Activated T-helper 2 cell treated with anti-CD3 and anti-CD28 coated beads, Interferon-gamma antibody, Interleukin-2, Interleukin-4, amounts not matched to agents 10 μg/mL and 5 μg/mL and 100 μg/mL, durations not matched to agents 14 hours and 24 hours and 36 hours (primary cell): ENCODE measurements at regions of chr17 and their contacts with region 1.

Region 1: DNA sequence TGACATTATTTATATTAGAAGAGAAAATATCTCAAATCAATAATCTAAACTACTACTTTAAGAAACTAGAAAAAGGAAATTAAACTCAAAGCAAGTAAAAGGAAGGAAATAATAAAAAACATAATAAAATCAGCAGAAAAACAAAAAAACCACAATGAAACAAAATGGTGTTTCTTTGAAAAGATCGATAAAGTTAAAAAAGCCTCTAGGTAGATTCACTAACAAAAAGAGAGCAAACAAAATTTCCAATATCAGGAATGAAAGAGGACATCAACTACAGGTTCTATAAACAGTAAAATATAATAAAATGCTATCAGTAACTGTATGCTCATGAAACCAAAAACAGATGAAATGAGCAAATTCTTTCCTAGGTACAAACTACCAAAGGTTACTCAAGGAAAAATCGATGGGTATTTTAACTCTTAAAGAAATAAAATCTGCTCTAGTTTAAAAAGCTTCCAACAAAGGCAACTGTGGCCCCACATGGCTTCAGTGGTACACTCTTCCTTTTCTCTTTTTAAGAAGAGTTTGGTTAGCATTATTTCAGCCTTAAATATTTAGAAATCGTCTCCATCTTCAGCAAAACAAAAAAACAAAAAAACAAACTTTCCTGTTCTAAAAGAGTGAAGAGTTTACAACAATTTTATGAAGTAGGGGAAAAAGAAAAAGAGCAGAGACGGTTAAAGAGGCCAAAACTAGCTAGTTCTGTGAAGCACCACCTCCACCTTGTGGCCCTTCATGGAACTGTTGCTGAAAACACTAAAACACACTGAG is 102.2 kb downstream of the TRIM37 start:
- DNase-seq: peak; percentile 44
- H3K4me3 Mint-ChIP-seq: no peak overlapping the region
- H3K27ac Mint-ChIP-seq: peak overlapping the region; percentile 70
- H3K4me1 Mint-ChIP-seq: peaks cover 20% of the 10 kb centered on the region
- H3K27me3 Mint-ChIP-seq: no peaks in the 10 kb centered on the region

Region 2: GRCh38 chr17:58517734-58518609 is 486.6 kb before region 1 on chr17:
- intact Hi-C with region 1: loop called (anchors 1 kb)
- DNase-seq: peak; percentile 100
- H3K4me3 Mint-ChIP-seq: peak overlapping the region; percentile 89
- H3K27ac Mint-ChIP-seq: peak overlapping the region; percentile 95
- H3K4me1 Mint-ChIP-seq: peaks cover 34% of the 10 kb centered on the region
- H3K27me3 Mint-ChIP-seq: peaks cover 2% of the 10 kb centered on the region

Region 3: DNA sequence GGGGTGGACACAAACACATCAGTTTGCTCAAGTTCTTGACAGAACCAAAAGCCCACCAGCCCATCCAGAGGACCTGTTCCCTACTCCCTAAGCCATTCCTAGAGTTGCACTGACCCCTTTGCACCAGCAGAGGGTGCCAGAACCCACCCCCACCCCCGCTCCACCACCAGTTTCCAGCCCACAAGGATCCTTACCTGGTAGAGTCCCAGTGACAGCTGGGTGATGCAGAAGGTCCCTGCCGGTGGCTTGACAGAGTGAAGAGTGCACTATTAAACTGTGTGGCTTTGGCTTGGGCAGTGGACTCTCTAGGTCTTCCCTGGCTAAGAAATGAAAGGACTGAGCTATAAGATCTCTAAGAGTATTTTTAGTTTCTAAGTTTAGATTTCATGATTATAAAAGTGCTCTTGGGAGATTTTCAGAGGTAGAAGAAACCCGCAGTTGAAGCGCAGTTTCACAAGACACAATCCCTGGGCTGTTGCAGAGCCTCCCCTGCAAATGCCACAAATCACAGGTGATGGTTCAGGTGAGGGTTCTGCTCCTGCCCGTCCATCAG is 416.7 kb before region 1 on chr17:
- intact Hi-C with region 1: loop called (anchors 1 kb)
- DNase-seq: peak; percentile 28
- H3K4me3 Mint-ChIP-seq: no peak overlapping the region
- H3K27ac Mint-ChIP-seq: no peak overlapping the region
- H3K4me1 Mint-ChIP-seq: peaks cover 5% of the 10 kb centered on the region
- H3K27me3 Mint-ChIP-seq: peaks cover 6% of the 10 kb centered on the region

Region 4: GRCh38 chr17:58710936-58711775 is 293.4 kb before region 1 on chr17:
- intact Hi-C with region 1: loop called (anchors 1 kb)
- DNase-seq: no peak
- H3K4me3 Mint-ChIP-seq: no peak overlapping the region
- H3K27ac Mint-ChIP-seq: no peak overlapping the region
- H3K4me1 Mint-ChIP-seq: peaks cover 14% of the 10 kb centered on the region
- H3K27me3 Mint-ChIP-seq: no peaks in the 10 kb centered on the region